Dendritic cell treated with granulocyte-macrophage colony-stimulating factor and Interleukin-4, amounts not matched to agents 40 ng/mL and 50 ng/mL, for 4 days (primary cell): ENCODE measurements at regions of chr6 and their contacts with region 1.

Region 1: GRCh38 chr6:168956884-168957730 is 296.5 kb downstream of the THBS2 start:
- H3K4me3 Mint-ChIP-seq: no peak overlapping the region
- H3K27ac Mint-ChIP-seq: no peak overlapping the region
- H3K4me1 Mint-ChIP-seq: no peaks in the 10 kb centered on the region
- H3K27me3 Mint-ChIP-seq: peaks cover 5% of the 10 kb centered on the region

Region 2: GRCh38 chr6:169326067-169326799 is 369.1 kb after region 1 on chr6:
- intact Hi-C with region 1: loop called (anchors 5 kb)
- H3K4me3 Mint-ChIP-seq: no peak overlapping the region
- H3K27ac Mint-ChIP-seq: no peak overlapping the region
- H3K4me1 Mint-ChIP-seq: peaks cover 10% of the 10 kb centered on the region
- H3K27me3 Mint-ChIP-seq: peaks cover 2% of the 10 kb centered on the region

Region 3: GRCh38 chr6:169778646-169779045 is 821.5 kb after region 1 on chr6:
- intact Hi-C with region 1: loop called (anchors 10 kb)
- H3K4me3 Mint-ChIP-seq: no peak overlapping the region
- H3K27ac Mint-ChIP-seq: no peak overlapping the region
- H3K4me1 Mint-ChIP-seq: no peaks in the 10 kb centered on the region
- H3K27me3 Mint-ChIP-seq: no peaks in the 10 kb centered on the region

Region 4: DNA sequence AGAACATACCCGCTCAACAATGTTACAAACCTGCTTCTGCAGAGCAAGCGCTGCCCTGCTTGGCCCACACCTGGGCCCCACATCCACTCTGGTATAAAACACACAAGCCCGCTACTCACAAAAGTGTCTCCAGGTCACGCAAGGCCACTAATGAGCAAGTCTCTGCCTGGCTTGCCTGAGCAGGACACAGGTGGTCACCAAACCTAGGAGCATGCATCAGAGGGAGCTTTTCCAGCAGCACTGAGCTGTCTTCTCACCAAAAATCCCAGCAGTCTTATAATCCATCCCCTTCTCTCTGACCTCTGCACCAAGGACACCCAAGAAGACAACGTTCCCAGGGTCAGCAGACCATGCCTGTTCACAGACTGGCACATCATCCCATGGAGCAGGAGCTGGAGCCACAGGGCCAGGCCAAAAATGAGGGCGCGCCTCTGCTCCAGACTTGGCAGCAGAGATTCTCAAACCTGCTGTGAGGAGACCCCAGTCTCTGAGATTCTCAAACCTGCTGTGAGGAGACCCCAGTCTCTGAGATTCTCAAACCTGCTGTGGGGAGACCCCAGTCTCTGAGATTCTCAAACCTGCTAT is 1233.0 kb after region 1 on chr6:
- intact Hi-C with region 1: no loop called
- H3K4me3 Mint-ChIP-seq: no peak overlapping the region
- H3K27ac Mint-ChIP-seq: no peak overlapping the region
- H3K4me1 Mint-ChIP-seq: no peaks in the 10 kb centered on the region
- H3K27me3 Mint-ChIP-seq: no peaks in the 10 kb centered on the region

Region 5: GRCh38 chr6:170516783-170517616 is 1559.9 kb after region 1 on chr6:
- intact Hi-C with region 1: loop called (anchors 5 kb)
- H3K4me3 Mint-ChIP-seq: no peak overlapping the region
- H3K27ac Mint-ChIP-seq: no peak overlapping the region
- H3K4me1 Mint-ChIP-seq: peaks cover 4% of the 10 kb centered on the region
- H3K27me3 Mint-ChIP-seq: peaks cover 15% of the 10 kb centered on the region